Activated CD4-positive, alpha-beta T cell treated with anti-CD3 and anti-CD28 coated beads for 36 hours (primary cell): ENCODE measurements at regions of chr19 and their contacts with region 1.

Region 1: GRCh38 chr19:45792470-45793177 is at the start of gene DMWD:
- DNase-seq: peak; percentile 100
- ATAC-seq: peak; percentile 93
- H3K4me3 Mint-ChIP-seq: peak within 1 kb of the TSS; percentile 95
- H3K27ac Mint-ChIP-seq: peak within 1 kb of the TSS; percentile 75
- H3K4me1 Mint-ChIP-seq: peaks cover 30% of the 10 kb centered on the region
- H3K27me3 Mint-ChIP-seq: peaks cover 16% of the 10 kb centered on the region
- total RNA-seq, gene DMWD: 31.1 to 35.1 TPM

Region 2: DNA sequence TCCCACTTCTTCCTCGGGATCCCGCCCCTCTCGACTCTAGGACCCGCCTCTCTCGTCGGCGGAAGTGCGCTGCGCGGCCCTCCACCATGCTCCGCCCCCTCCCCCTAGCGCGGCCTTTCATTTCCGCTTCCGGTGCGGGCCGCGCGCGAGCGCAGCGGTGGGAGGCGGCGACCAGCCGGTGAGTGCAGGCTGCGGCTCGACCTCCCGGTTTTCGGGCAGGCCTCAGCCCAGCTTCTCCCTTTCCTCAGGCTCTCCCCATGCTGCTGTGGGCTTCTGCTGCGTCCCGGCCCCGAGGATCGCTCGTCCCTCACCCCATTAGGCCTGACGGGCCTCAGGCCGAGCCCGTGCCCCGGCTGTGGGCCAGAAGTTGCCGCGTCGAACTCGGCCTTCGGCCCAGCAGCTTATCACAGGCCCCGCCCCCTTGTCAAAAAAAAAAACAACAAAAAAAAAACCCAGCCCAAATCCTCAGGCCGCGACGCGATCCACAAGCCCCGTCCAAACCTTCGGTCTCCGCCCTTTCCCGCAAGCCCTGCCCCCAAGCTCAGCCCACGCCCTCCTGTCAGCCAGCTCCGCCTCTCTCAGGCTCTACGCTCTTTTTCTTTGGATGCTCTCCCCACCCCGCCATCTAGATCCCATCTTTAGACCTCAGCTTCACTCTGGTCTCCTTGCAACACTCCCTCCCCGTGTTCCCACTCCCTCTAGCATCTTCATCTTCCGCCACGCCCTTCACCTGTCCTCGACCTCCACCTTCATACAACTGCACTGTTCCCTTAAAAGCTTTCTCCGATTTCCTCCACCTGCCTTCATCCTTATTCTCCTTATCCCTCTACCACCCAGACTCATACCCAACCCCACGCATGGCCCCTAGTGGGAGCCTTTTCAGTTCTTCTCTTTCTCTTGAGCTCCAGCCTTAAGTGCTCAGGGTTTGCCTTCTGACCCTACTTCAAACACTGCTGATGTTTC is 753.4 kb before region 1 on chr19 and contains the start of gene CLASRP:
- CTCF ChIA-PET with region 1: no interaction called
- POLR2A ChIA-PET with region 1: no interaction called
- intact Hi-C with region 1: loop called in 1 of 2 experiments (anchors 1 kb)
- DNase-seq: peak; percentile 94
- ATAC-seq: peak; percentile 96
- H3K4me3 Mint-ChIP-seq: peak within 1 kb of the TSS; percentile 97
- H3K27ac Mint-ChIP-seq: peak within 1 kb of the TSS; percentile 96
- H3K4me1 Mint-ChIP-seq: peaks cover 32% of the 10 kb centered on the region
- H3K27me3 Mint-ChIP-seq: no peaks in the 10 kb centered on the region
- total RNA-seq, gene CLASRP: 101 to 103 TPM

Region 3: DNA sequence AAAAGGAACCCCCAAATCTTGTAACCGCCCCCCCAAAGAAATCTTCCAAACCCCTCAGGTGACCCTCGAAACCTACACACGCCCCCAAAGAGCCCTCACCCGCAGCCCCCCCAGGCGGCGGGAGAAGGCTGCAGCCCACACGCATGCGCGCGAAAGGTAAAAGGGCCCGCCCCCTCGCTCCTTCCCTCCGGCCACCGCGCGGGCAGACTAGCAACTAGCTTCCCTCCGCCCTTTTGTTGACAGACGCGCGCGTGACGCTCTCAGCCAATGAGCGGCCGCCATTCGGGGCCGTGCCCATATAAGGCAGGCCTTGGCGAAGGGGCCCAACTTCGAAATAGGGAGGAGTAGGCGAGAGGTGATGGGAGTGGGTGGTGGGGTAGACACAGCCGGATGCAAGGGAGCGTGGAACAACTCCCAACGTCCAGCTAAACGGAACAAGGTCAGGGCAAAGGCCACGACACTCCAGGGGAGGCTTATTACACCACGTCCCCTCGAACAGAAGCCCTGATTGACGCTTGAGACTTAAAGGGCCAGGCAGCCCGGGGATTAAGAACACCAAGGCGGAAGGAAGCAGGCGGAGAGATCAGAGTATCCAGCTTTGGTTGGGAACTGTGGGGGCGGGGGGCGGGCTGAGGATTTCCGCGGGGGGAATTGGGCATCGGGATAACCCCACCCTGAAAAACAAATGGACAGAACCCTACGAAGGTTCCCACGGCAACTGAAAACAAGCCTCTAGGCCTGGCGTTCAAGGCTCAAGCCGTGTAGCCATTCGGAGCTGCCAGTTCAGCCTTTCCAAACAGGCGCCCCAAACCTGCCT is 75.2 kb before region 1 on chr19:
- CTCF ChIA-PET with region 1: interaction called, 3 read pairs
- POLR2A ChIA-PET with region 1: no interaction called
- intact Hi-C with region 1: loop called in 1 of 2 experiments (anchors 1 kb)
- DNase-seq: peak; percentile 99
- ATAC-seq: peak; percentile 97
- H3K4me3 Mint-ChIP-seq: peak overlapping the region; percentile 93
- H3K27ac Mint-ChIP-seq: peak overlapping the region; percentile 94
- H3K4me1 Mint-ChIP-seq: peaks cover 40% of the 10 kb centered on the region
- H3K27me3 Mint-ChIP-seq: no peaks in the 10 kb centered on the region

Region 4: GRCh38 chr19:45779231-45780145 is 13.1 kb before region 1 on chr19:
- CTCF ChIA-PET with region 1: interaction called, 126 read pairs
- POLR2A ChIA-PET with region 1: no interaction called
- intact Hi-C with region 1: loop called (anchors 1 kb)
- DNase-seq: peak; percentile 97
- ATAC-seq: peak; percentile 99
- H3K4me3 Mint-ChIP-seq: peak overlapping the region; percentile 47
- H3K27ac Mint-ChIP-seq: no peak overlapping the region
- H3K4me1 Mint-ChIP-seq: peaks cover 16% of the 10 kb centered on the region
- H3K27me3 Mint-ChIP-seq: peaks cover 9% of the 10 kb centered on the region

Region 5: DNA sequence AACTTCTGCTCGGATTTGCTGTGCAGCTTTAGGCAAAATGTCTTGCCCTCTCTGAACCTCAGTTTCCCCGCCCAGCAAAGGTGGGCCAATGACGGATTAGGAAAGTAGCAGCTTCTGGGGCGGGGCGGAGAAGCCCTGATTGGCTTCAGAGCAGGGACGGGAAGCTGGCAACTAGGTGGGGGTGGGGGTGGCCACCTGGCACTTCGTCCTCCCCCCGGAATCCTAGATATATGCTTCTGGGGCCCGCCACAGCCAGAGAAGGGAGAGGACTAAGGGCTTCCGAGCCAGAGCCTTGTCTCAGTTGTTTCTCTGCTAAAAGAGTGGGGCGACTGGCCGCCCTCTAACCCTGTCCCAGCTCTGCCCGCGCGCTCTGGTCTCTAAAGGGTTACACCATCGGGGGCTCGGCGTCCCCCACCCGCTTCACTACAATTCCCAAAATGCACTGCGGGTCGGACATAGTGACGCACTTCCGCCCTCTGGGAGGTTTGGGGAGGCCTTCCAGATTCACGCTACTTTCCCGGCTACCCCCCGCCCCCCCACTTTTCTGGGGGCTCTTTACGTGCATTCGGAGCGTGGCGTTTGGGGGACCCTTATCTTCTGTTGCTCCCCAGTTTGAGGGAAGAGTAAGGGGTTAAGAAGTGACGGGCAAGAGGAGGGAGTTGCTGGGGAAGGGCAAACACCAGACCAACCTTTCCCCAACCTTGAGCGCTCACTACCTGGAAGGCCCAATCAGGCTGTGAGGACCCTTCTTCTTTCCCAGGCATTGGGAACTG is 94.0 kb after region 1 on chr19:
- CTCF ChIA-PET with region 1: interaction called, 3 read pairs
- POLR2A ChIA-PET with region 1: no interaction called
- intact Hi-C with region 1: loop called in 1 of 2 experiments (anchors 1 kb)
- DNase-seq: peak; percentile 96
- ATAC-seq: peak; percentile 85
- H3K4me3 Mint-ChIP-seq: peak overlapping the region; percentile 85
- H3K27ac Mint-ChIP-seq: peak overlapping the region; percentile 95
- H3K4me1 Mint-ChIP-seq: peaks cover 17% of the 10 kb centered on the region
- H3K27me3 Mint-ChIP-seq: no peaks in the 10 kb centered on the region

Region 6: DNA sequence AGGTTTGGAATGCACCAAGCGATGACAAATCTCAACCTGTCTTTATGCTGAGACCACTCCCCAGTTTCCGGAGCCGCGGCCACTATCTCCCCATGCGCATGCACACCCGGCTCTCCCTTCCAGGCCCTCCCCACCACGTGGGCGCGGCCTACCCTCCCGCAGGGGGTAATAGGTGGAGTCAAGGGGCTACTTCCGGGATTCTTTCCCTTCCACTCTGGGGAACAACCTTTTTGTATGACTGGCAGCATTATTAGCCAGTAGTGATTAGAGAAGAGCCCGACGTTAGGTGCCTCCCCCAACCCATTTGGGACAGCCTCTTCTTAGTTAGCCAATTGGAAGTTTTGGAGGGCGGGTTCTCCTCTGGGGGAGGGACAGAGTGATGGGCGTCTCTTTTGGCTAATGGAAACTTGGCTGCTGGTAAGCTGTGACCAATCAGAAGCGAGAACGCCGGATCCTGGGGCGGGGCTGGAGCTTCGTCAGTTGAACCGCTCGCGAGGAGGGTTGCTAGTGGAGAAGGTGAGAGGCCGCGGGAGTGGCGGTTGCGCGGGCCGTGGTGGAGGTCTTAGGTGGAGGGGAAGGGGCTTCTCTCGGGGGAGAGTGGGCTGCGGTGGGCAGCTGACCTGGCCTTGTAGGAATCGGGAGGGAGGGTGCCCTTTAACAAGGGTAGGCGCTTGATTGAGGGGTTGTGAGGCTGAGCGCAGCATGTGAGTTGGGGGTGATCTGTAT is 202.5 kb after region 1 on chr19 and contains the start of gene CCDC61:
- CTCF ChIA-PET with region 1: no interaction called
- POLR2A ChIA-PET with region 1: no interaction called
- intact Hi-C with region 1: loop called in 1 of 2 experiments (anchors 1 kb)
- DNase-seq: peak; percentile 96
- ATAC-seq: peak; percentile 98
- H3K4me3 Mint-ChIP-seq: no peak within 1 kb of the TSS
- H3K27ac Mint-ChIP-seq: no peak within 1 kb of the TSS
- H3K4me1 Mint-ChIP-seq: peaks cover 22% of the 10 kb centered on the region
- H3K27me3 Mint-ChIP-seq: peaks cover 7% of the 10 kb centered on the region
- total RNA-seq, gene CCDC61: 22.4 to 26.2 TPM